ENCODE measurements at regions of chr4 and their contacts with region 1.

Region 1: GRCh38 chr4:182354867-182355266 is 111.7 kb downstream of the TENM3 start:
- DNase-seq: no peak

Region 2: DNA sequence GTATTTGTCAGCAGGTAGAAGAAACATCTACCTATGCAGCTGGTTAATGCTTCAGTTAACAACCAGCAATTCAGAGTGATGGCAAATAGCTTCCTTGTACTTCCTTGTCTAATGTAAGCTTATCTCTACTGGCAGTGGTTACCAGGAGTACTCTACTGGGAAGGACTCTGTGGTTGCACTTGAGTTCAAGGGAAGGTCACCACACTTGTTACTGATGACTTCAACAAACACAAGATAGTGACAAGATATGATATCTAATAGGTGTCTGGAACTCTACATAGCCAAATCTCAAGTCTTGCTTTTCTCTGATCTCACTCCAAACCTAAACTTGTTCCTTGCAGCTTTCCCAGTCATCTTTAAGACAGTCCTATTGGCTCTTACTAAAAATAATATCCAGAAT is 1756.6 kb before region 1 on chr4:
- intact Hi-C with region 1: no loop called
- DNase-seq: no peak

Region 3: DNA sequence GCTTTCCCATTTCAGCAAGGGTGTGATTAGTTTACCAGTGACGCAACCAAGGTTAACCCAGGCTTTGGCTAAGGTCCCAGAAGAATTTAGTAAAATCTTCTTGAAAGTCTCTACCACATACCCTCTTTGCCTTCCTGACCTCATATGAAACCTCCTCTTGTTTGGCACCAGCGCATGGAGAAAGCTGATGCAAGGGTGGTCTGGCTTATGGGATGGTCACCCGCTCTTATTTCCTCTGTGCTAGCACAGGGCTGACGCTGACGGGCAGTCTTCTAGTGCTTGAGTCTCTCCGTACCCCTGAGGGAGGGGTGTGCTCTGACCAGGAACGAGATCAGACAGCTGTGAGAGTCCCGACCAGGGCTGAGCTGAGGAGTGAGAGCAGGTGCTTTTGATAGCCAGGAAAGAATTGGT is 25.9 kb after region 1 on chr4:
- intact Hi-C with region 1: loop called in 1 of 2 experiments (anchors 2 kb)
- DNase-seq: no peak